ENCODE measurements at regions of chr16 and their contacts with region 1.

Region 1: DNA sequence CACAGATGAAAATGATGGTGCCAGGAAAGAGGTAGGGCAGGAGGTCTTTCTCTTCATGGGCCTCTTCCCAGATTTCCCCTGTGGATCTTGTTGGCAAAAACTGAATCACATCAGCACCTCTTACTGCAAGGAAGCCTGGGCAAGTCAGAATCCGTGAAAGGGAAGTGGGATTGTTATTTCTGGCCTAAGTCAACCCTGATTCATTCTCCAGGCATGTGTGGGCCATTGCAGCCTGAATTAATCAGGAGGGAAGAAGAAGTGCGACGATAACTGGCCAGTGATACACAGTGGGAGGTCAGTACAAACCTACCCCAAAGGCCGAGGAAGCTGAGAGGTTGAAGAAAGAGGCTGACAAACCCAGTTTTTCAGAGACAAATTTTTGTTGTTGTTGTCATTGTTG is 17.9 kb upstream of the NSMCE1 start:
- DNase-seq: no peak
- H3K4me3 Mint-ChIP-seq: no peak overlapping the region
- H3K27ac Mint-ChIP-seq: no peak overlapping the region
- H3K4me1 Mint-ChIP-seq: peaks cover 72% of the 10 kb centered on the region
- H3K27me3 Mint-ChIP-seq: peaks cover 8% of the 10 kb centered on the region

Region 2: DNA sequence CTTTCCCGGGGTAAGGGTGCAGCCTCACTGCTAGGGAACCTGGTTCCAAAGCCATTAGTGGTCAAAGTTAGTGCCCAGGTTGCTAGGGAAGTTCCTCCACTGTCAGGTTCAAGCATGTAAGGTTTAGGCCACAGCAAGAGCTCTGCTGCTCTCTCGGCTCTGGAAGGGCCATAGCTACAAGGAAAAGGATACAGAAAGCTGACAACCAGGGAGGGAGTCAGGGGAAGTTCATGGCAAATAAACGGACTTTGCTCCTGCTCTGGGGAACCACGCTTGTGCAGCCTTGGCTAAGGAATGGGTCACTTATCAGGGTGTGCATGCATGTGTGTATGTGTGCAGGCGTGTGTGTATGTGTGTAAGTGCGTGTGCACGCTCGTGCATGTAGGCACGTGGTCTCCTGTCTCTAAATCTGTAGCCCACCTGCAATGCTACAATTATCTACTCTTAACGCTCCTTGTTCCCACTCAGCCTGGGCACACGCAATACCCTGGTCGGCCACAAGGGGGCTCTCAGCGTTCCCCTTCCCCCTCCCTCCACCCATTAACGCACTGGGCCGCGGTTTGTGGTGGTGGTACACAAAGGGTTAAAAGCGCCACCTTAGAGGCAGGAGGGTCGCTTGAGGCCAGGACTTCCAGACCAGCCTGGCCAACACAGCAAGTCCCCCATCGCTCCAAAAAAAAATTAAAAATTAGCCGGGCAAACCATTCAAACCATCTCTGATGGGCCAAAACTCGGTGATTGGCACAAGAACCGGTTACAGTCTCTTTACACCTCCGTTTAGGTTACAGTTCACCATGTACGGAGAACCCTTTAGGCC is 131.5 kb before region 1 on chr16:
- CTCF ChIA-PET with region 1: no interaction called
- intact Hi-C with region 1: no loop called
- DNase-seq: peak; percentile 83
- H3K4me3 Mint-ChIP-seq: no peak overlapping the region
- H3K27ac Mint-ChIP-seq: no peak overlapping the region
- H3K4me1 Mint-ChIP-seq: peaks cover 14% of the 10 kb centered on the region
- H3K27me3 Mint-ChIP-seq: no peaks in the 10 kb centered on the region

Region 3: GRCh38 chr16:27273670-27274423 is 12.6 kb before region 1 on chr16:
- CTCF ChIA-PET with region 1: interaction called, 6 read pairs
- intact Hi-C with region 1: loop called (anchors 1 kb)
- DNase-seq: peak; percentile 54
- H3K4me3 Mint-ChIP-seq: peak overlapping the region; percentile 7
- H3K27ac Mint-ChIP-seq: peak overlapping the region; percentile 72
- H3K4me1 Mint-ChIP-seq: peaks cover 65% of the 10 kb centered on the region
- H3K27me3 Mint-ChIP-seq: no peaks in the 10 kb centered on the region

Measured in activated naive CD4-positive, alpha-beta T cell treated with anti-CD3 and anti-CD28 coated beads for 36 hours (primary cell).